CD4-positive, alpha-beta T cell (primary cell): ENCODE measurements at regions of chr2 and their contacts with region 1.

Region 1: GRCh38 chr2:158006961-158007719 is 94.5 kb upstream of the UPP2 start:
- DNase-seq: peak in 2 of 14 experiments; percentile 16 to 20
- ATAC-seq: no peak
- H3K4me3 ChIP-seq: no peak overlapping the region
- H3K4me3 Mint-ChIP-seq: no peak overlapping the region
- H3K27ac ChIP-seq: no peak overlapping the region
- H3K27ac Mint-ChIP-seq: no peak overlapping the region
- H3K4me1 ChIP-seq: no peaks in the 10 kb centered on the region
- H3K4me1 Mint-ChIP-seq: peaks cover 9% of the 10 kb centered on the region
- H3K27me3 ChIP-seq: no peaks in the 10 kb centered on the region
- H3K27me3 Mint-ChIP-seq: no peaks in the 10 kb centered on the region
- CTCF ChIP-seq: no peak

Region 2: DNA sequence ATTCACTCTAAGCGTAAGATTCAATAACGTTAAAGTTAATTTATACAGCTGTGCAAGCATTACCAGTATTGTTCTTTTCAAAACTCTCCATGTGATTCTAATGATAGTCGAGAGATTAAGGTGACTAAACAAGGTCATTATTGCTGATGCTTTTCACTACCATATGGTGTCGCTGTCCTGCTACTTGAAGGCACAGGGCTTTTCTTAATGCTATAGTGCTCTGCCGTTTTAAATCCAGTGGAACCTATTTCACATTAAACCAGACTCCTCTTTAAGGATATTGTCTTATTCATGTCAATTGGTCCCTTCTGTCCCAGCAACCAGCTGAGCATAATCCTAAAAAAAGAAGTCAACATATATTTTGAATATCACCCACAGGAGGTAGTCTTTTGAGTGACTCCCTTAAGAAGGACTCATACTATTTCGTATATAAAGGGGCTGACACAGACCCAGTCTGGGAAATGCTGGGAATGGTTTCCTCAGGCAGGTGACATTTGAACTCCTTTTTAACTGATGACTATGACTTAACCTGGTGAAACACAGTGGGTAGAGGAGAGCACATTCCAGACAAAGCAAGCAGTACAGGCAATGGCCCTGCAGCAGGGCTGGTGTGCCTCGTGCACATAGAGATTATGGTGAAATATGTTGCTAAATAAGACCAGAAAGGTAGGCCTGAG is 509.4 kb before region 1 on chr2:
- CTCF ChIA-PET with region 1: no interaction called
- POLR2A ChIA-PET with region 1: no interaction called
- intact Hi-C with region 1: loop called (anchors 2 kb)
- DNase-seq: peak in 4 of 14 experiments; percentile 8 to 66 (median 60)
- ATAC-seq: peak; percentile 96
- H3K4me3 ChIP-seq: no peak overlapping the region
- H3K4me3 Mint-ChIP-seq: no peak overlapping the region
- H3K27ac ChIP-seq: no peak overlapping the region
- H3K27ac Mint-ChIP-seq: no peak overlapping the region
- H3K4me1 ChIP-seq: peaks cover under 1% of the 10 kb centered on the region
- H3K4me1 Mint-ChIP-seq: peaks cover 28% of the 10 kb centered on the region
- H3K27me3 ChIP-seq: no peaks in the 10 kb centered on the region
- H3K27me3 Mint-ChIP-seq: no peaks in the 10 kb centered on the region
- CTCF ChIP-seq: peak; percentile 77

Region 3: DNA sequence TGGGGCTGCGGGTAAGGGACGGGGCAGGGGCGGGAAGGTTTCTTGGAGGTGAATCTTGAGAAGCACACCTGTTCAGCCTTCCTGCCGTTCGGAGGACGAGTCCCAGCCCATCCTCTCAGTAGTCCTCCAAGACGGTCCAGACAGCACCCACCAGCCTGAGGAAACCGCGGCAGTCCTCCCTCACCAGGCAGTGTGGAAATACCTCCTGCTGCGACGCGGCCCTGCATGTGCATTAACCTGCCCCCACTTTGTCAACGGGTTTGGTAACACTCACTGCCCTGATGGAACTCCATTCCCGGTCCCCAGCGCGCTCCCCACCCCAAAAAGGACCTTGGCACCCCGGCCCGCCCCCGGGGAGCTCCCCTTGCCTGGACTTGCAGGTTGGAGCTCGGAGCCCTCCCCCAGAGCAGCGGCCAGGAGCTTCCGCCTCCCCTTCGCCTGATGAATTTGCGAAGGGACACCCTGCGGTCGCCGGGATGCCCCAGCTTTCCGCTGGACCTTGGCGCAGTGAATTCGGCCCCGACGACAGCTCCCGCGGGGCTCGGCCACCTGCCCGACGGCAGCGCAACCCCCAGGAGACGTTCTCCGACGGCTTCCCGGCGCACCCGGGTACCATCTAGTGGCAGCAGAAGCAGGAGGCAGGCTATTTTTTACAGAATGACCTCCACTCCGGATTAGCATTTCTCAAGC is 410.0 kb before region 1 on chr2:
- CTCF ChIA-PET with region 1: interaction called, 3 read pairs
- POLR2A ChIA-PET with region 1: no interaction called
- intact Hi-C with region 1: loop called (anchors 5 to 10 kb)
- DNase-seq: peak; percentile 31 to 70 (median 50)
- ATAC-seq: peak; percentile 76
- H3K4me3 ChIP-seq: peak overlapping the region; percentile 45
- H3K4me3 Mint-ChIP-seq: peak overlapping the region; percentile 70
- H3K27ac ChIP-seq: no peak overlapping the region
- H3K27ac Mint-ChIP-seq: no peak overlapping the region
- H3K4me1 ChIP-seq: peaks cover 6% of the 10 kb centered on the region
- H3K4me1 Mint-ChIP-seq: peaks cover 16% of the 10 kb centered on the region
- H3K27me3 ChIP-seq: peaks cover 0 to 5% of the 10 kb centered on the region in 2 experiments
- H3K27me3 Mint-ChIP-seq: no peaks in the 10 kb centered on the region
- CTCF ChIP-seq: peak; percentile 68

Region 4: DNA sequence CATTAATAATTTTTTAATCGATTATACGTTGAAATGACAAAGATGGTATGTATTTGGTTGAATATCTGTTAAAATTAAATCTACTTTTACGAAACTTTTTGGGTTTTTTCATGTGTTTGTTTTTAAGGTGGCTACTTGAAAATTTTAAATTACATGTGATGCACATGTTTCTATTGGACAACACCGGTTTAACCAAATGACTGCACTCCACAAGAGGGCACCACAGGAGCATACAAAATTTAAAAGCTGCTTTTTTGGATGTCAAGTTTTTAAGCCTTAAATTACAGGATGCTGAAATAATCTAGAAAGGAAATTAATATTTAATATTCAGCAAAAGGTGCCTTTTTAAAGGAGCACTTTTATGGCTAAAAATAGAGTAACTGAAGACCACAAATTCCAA is 229.7 kb before region 1 on chr2:
- CTCF ChIA-PET with region 1: interaction called, 3 read pairs
- POLR2A ChIA-PET with region 1: no interaction called
- intact Hi-C with region 1: loop called (anchors 1 kb)
- DNase-seq: peak; percentile 13 to 62 (median 39)
- ATAC-seq: no peak
- H3K4me3 ChIP-seq: no peak overlapping the region
- H3K4me3 Mint-ChIP-seq: no peak overlapping the region
- H3K27ac ChIP-seq: no peak overlapping the region
- H3K27ac Mint-ChIP-seq: no peak overlapping the region
- H3K4me1 ChIP-seq: peaks cover 8% of the 10 kb centered on the region
- H3K4me1 Mint-ChIP-seq: peaks cover 13% of the 10 kb centered on the region
- H3K27me3 ChIP-seq: no peaks in the 10 kb centered on the region
- H3K27me3 Mint-ChIP-seq: no peaks in the 10 kb centered on the region
- CTCF ChIP-seq: peak; percentile 64